Endothelial cell of umbilical vein (primary cell): ENCODE measurements at regions of chr15 and their contacts with region 1.

Region 1: DNA sequence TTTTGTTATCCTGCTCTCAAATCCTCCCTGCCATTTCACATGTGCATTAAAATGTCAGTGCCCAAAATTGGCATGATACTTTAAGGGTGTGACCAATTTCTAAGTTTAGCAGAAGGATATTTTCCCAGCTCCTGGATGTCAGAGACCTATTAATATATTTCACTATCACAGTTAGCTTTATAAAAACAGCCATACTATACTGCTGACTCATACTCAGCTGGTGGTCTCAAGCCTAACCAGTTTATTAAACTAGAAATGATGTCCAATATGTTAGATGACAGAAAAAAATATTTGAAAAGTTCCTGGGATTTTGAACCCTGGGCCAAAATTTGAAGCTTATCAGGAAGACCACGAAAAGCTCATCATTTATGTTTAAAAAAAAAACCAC is 60.9 kb upstream of the ZNF280D start:
- DNase-seq: no peak
- H3K4me3 ChIP-seq: no peak overlapping the region
- H3K27ac ChIP-seq: no peak overlapping the region
- H3K4me1 ChIP-seq: no peaks in the 10 kb centered on the region
- H3K27me3 ChIP-seq: no peaks in the 10 kb centered on the region
- CTCF ChIP-seq: no peak
- POLR2A ChIP-seq: no peak

Region 2: GRCh38 chr15:56805466-56806146 is 11.4 kb after region 1 on chr15:
- CTCF ChIA-PET with region 1: interaction called, 13 read pairs
- POLR2A ChIA-PET with region 1: no interaction called
- dilution Hi-C with region 1: no loop called
- intact Hi-C with region 1: no loop called
- DNase-seq: peak; percentile 90
- H3K4me3 ChIP-seq: peak overlapping the region in 1 of 3 experiments; percentile 19
- H3K27ac ChIP-seq: peak overlapping the region; percentile 74
- H3K4me1 ChIP-seq: peaks cover 11% of the 10 kb centered on the region
- H3K27me3 ChIP-seq: peaks cover 0 to 3% of the 10 kb centered on the region in 2 experiments
- CTCF ChIP-seq: no peak
- POLR2A ChIP-seq: no peak

Region 3: GRCh38 chr15:56821721-56822425 is 27.7 kb after region 1 on chr15:
- CTCF ChIA-PET with region 1: no interaction called
- POLR2A ChIA-PET with region 1: no interaction called
- dilution Hi-C with region 1: no loop called
- intact Hi-C with region 1: no loop called
- DNase-seq: peak; percentile 77
- H3K4me3 ChIP-seq: no peak overlapping the region
- H3K27ac ChIP-seq: no peak overlapping the region
- H3K4me1 ChIP-seq: peaks cover 18% of the 10 kb centered on the region
- H3K27me3 ChIP-seq: peaks cover 0 to 3% of the 10 kb centered on the region in 2 experiments
- CTCF ChIP-seq: peak; percentile 65 to 74
- POLR2A ChIP-seq: no peak